RWPE1 (cell line): ENCODE measurements at regions of chr20 and their contacts with region 1.

Region 1: DNA sequence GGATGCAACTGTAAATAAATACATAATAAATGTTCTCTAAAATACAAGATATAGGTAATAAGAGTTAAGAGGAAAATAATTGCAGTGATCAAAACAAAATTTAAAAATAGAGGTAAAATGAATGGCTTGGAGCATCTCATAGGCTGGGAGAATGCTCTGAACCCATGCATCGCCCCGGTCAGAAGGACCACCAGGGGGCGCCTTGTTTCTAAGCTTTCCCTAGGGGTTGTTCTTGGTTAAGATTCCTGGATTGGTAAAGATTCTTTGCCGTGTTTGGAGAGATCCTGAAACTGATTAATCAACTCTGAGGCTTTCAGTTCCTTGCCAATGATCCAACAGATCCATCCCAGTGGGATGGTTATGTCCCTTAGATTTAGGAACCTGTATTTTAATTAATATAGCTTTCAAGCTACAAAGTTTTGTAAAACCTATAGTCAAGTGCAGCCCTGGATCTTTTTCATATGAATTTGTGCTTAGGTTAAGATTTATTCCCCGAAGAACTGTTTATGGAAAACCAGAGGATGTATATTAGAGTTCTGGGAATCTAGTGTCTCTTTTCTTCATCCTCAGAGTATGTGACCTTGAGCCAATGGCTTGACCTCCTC is 45.3 kb upstream of the PRELID3B start:
- DNase-seq: peak; percentile 88
- H3K27ac ChIP-seq: no peak overlapping the region
- CTCF ChIP-seq: peak; percentile 98

Region 2: GRCh38 chr20:59102841-59103299 is 14.9 kb after region 1 on chr20:
- CTCF ChIA-PET with region 1: interaction called, 15 read pairs
- POLR2A ChIA-PET with region 1: no interaction called
- DNase-seq: no peak
- H3K27ac ChIP-seq: no peak overlapping the region
- CTCF ChIP-seq: no peak

Region 3: GRCh38 chr20:59190466-59190865 is 102.5 kb after region 1 on chr20:
- CTCF ChIA-PET with region 1: no interaction called
- POLR2A ChIA-PET with region 1: no interaction called
- DNase-seq: no peak
- H3K27ac ChIP-seq: no peak overlapping the region
- CTCF ChIP-seq: no peak

Region 4: DNA sequence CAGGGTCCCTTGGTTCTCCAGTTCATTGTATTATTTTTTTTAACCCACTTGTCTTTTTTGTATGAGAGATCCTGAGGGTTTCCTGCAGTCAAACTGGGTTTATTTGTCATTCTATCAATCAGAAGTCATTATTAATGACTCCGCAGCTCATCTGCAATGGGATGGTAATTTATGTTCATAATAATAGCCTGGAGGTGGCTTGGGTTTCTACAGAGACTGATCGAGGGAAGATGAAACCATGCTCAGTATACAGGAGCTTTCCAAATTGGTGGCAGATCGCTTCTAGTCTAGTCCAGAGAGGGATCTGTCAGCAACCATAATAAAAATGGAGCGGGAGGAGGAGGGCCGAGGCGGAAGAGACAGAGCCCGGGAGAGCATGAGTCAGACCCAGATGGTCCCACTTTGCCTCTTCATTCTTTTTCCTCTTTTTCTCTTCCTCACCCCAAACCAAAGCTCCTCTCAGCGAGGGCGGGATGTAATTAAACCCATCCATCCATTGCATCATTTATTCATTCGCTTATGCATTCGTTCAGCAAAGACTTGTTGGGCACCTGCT is 235.0 kb after region 1 on chr20:
- CTCF ChIA-PET with region 1: no interaction called
- POLR2A ChIA-PET with region 1: no interaction called
- DNase-seq: no peak
- H3K27ac ChIP-seq: no peak overlapping the region
- CTCF ChIP-seq: no peak